ENCODE measurements at regions of chr2 and their contacts with region 1.

Region 1: GRCh38 chr2:216792222-216793021 is 67.4 kb downstream of the TNP1 start:
- DNase-seq: peak; percentile 73 to 94
- H3K4me3 ChIP-seq: no peak overlapping the region
- H3K27ac ChIP-seq: peak overlapping the region; percentile 90 to 93
- H3K4me1 ChIP-seq: peaks cover 11 to 28% of the 10 kb centered on the region in 2 donors
- H3K27me3 ChIP-seq: no peaks in the 10 kb centered on the region
- CTCF ChIP-seq: peak in 2 of 3 experiments; percentile 18 to 25

Region 2: DNA sequence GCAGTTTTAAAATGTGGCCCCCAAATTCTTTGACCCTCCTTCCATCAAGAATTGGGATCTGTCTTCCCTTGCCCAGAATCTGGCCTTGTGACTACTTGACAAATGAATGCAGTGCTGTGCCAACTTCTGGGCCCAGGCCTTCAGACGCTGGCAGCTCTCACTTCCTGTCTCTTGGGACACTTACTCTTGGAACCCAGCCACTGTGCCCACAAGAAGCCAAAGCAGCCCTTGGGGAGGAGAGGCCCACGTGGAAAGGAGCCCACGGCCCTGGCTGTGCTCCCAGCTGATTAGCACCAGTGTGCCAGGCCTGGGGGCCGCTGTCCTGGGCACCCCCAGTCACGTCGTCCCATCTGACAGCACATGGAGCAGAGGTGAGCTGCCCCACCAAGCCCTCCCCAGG is 237.1 kb before region 1 on chr2:
- intact Hi-C with region 1: loop called (anchors 10 kb)
- DNase-seq: peak; percentile 72 to 93
- H3K4me3 ChIP-seq: peak overlapping the region in 1 of 2 donors; percentile 5
- H3K27ac ChIP-seq: peak overlapping the region; percentile 64 to 85
- H3K4me1 ChIP-seq: peaks cover 27 to 73% of the 10 kb centered on the region in 2 donors
- H3K27me3 ChIP-seq: no peaks in the 10 kb centered on the region
- CTCF ChIP-seq: no peak

Region 3: GRCh38 chr2:216713691-216714336 is 78.6 kb before region 1 on chr2:
- intact Hi-C with region 1: loop called (anchors 2 kb)
- DNase-seq: peak; percentile 36 to 89
- H3K4me3 ChIP-seq: no peak overlapping the region
- H3K27ac ChIP-seq: peak overlapping the region; percentile 60 to 75
- H3K4me1 ChIP-seq: peaks cover 7 to 26% of the 10 kb centered on the region in 2 donors
- H3K27me3 ChIP-seq: no peaks in the 10 kb centered on the region
- CTCF ChIP-seq: no peak

Region 4: DNA sequence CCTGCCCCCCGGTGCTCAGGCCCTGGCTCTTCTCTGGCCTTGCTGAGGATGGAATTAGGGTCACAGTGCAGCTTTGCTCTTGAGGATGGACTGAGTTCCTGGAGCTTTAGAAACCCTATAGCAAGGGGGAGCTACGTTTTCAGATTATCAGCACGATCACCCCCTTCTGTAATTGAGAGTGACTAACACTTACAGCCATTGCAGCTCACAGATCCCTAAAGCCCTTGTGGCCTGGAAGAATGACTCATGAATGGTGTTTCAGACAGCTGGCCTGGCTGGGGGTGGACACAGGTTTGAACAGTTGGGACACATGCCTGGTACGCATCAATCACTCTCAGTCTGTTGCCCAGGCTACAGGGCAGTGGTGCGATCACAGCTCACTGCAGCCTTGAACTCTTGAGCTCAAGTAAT is 17.4 kb before region 1 on chr2:
- intact Hi-C with region 1: loop called (anchors 1 kb)
- DNase-seq: peak; percentile 65 to 93
- H3K4me3 ChIP-seq: no peak overlapping the region
- H3K27ac ChIP-seq: peak overlapping the region; percentile 67 to 85
- H3K4me1 ChIP-seq: peaks cover 3 to 17% of the 10 kb centered on the region in 2 donors
- H3K27me3 ChIP-seq: no peaks in the 10 kb centered on the region
- CTCF ChIP-seq: peak; percentile 19 to 23 (median 22)

Region 5: DNA sequence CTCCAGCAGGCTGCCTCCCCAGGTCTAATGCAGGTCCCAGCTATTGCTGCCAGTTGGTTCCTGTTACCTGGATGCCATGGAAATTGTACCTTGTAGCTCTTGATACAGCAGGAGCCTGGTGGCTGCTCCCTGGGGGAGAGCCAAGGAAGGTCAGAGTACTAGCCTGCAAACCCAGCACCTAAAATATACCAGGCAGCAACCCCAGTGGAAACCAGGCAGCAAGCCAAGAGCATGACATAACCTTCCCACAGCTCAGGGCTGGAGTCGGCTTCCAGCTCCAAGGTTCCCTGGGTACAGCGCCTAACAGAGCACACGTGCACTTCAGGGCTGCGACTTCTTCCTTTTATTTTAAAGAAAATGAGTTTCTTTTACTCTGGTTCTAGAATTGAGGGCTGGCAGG is 37.1 kb after region 1 on chr2:
- intact Hi-C with region 1: loop called (anchors 5 kb)
- DNase-seq: peak; percentile 28 to 89
- H3K4me3 ChIP-seq: no peak overlapping the region
- H3K27ac ChIP-seq: peak overlapping the region in 1 of 2 donors; percentile 6
- H3K4me1 ChIP-seq: peaks cover 11 to 29% of the 10 kb centered on the region in 2 donors
- H3K27me3 ChIP-seq: no peaks in the 10 kb centered on the region
- CTCF ChIP-seq: no peak